Heart right ventricle (tissue), 16 donors: ENCODE measurements at regions of chrX and their contacts with region 1.

Region 1: DNA sequence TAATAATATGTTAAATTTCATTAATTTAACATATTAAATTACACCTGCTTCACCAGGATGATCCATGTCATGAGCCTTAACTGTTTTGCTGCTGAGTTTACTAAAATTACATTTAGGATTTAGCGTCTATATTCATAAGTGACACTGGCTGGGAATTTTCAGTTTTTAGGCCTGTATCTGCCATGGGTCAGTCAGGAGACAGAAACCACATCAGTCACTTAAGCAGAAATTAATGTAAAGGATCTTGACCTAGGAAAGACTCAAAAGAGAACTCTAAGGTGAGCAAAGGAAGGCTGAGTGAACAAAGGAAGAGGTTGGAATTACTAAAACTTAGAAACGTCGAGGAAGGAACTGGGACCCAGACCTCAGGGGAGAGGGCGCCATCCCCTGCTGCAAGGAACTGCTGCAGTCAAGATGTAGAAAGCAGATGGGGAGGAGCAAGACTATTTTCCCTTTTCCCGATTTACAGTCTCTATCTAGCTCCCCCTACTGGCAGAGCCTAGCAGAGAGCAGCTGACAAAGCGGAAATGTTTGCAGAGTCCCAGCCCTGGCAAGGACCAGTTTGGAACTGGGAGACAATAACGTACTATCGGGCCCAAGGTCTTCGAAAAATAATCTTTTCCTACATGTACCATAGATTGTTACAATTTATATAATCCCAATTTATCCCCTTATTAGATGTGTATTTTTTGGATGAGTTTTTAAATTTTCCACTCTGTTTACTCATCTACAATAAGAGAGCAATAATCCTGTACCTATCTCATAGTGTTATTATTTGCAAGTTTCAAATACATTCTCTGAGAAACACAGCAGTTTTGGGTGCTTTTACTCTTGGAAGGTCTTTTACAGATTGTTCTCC is 22.6 kb upstream of the RBBP7 start:
- DNase-seq: peak; percentile 18 to 72
- ATAC-seq: peak in 7 of 8 donors; percentile 69 to 85 (median 79)
- H3K4me3 ChIP-seq: no peak overlapping the region
- H3K27ac ChIP-seq: no peak overlapping the region
- H3K4me1 ChIP-seq: peaks cover 0 to 4% (median 0%) of the 10 kb centered on the region in 9 donors
- H3K27me3 ChIP-seq: peaks cover 0 to 87% (median 0%) of the 10 kb centered on the region in 7 donors
- CTCF ChIP-seq: peak; percentile 41 to 88 (median 77)

Region 2: DNA sequence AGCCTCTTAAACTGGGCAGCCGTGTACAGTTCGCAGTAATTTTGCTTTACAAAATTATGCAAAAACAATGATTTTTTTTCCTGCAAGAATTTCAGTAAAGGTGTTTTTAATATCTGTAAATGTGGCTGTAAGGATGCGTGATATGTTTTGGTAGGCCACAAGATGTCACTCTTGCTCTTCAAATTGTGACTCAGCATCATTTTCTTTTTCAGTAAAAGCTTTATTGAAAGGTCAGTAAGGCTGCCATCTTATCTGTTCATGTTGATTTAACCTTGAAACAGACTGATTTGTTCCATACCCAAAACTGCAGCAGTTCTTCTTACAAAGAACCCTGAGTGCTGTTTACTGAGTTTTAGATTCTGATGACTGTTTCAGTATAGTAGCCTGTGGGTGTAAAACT is 66.5 kb before region 1 on chrX:
- intact Hi-C with region 1: loop called in 5 of 10 experiments (anchors 5 to 10 kb)
- DNase-seq: no peak
- ATAC-seq: peak in 1 of 8 donors; percentile 27
- H3K4me3 ChIP-seq: no peak overlapping the region
- H3K27ac ChIP-seq: peak overlapping the region in 1 of 10 donors; percentile 31
- H3K4me1 ChIP-seq: peaks cover 0 to 12% (median 3%) of the 10 kb centered on the region in 9 donors
- H3K27me3 ChIP-seq: peaks cover 0 to 4% (median 0%) of the 10 kb centered on the region in 7 donors
- CTCF ChIP-seq: peak in 8 of 9 donors; percentile 13 to 64 (median 54)

Region 3: DNA sequence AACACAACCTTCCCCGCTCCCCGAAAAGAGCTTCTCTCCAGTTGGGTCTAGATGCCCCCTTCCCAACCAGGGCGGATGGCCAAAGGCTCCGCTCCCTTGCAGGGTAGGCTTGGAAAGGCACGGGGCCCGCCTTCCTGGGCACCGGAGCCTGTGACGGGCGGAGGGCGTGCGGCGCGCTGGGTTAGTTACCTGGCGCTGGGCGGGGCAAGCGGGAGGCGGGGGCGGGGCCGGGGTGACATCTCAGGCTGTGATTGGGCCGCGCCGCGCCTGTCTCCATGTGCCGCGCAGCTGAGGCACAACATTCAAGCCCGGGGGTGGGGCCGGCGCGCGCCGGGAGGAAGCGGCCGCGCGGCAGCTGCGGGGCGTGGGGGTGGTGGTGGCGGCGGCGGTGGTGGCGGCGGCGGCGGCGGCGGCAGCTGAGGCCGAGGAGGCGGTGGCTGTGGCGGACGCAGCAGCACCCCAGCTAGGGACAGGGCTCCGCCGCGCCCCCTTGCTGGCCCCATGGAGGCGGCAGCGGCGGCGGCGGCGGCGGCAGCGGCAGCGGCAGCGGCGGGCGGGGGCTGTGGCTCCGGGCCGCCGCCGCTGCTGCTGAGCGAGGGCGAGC is 53.7 kb after region 1 on chrX and contains the start of gene REPS2:
- intact Hi-C with region 1: loop called in 2 of 10 experiments (anchors 10 kb)
- DNase-seq: peak; percentile 75 to 83
- ATAC-seq: peak; percentile 96 to 100 (median 98)
- H3K4me3 ChIP-seq: peak within 1 kb of the TSS; percentile 18 to 67 (median 57)
- H3K27ac ChIP-seq: peak within 1 kb of the TSS in 2 of 10 donors; percentile 22 to 31
- H3K4me1 ChIP-seq: peaks cover 0 to 10% (median 0%) of the 10 kb centered on the region in 9 donors
- H3K27me3 ChIP-seq: peaks cover 0 to 76% (median 0%) of the 10 kb centered on the region in 7 donors
- CTCF ChIP-seq: no peak
- total RNA-seq, gene REPS2: 3.3 to 15.5 (median 8.2) TPM